ENCODE measurements at regions of chrX and their contacts with region 1.

Region 1: DNA sequence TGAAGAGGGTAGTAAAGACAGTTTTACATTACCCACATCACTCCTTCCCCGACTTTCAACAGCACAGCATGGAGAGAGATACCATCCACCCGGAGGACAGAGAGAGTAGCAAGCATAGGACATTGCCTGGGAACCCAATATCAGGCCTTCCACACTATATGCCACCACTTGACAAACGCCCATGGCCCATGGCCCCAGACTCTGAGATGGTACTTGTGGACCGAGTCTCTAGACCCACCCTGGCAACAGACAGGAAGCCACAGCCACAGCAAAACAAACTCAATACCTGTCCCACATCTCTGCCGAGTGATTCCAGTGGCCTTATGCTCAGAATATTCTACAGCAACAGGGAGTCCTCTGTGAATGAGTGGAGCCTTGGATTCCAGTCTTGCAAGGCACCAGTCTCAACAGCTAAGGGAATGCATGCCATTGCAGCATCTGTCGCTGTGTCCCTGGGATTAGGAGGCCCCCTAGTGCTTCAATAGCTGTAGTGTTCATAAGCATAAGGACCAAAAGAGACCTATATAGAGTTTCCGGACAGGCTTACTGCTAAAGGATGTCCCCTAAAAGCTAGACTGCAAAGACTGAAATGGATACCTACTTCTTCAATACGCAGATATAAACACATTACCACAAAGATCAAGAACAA is 14.7 kb upstream of the CT55 start:
- DNase-seq: peak; percentile 32
- ATAC-seq: peak; percentile 98
- H3K4me3 Mint-ChIP-seq: no peak overlapping the region
- H3K27ac Mint-ChIP-seq: no peak overlapping the region
- H3K4me1 Mint-ChIP-seq: peaks cover 4% of the 10 kb centered on the region; the same call in 1 of the 2 replicates
- H3K27me3 Mint-ChIP-seq: no peaks in the 10 kb centered on the region; the same call in 1 of the 2 replicates
- CTCF ChIP-seq: peak; percentile 51; the same call in 1 of the 2 replicates

Region 2: DNA sequence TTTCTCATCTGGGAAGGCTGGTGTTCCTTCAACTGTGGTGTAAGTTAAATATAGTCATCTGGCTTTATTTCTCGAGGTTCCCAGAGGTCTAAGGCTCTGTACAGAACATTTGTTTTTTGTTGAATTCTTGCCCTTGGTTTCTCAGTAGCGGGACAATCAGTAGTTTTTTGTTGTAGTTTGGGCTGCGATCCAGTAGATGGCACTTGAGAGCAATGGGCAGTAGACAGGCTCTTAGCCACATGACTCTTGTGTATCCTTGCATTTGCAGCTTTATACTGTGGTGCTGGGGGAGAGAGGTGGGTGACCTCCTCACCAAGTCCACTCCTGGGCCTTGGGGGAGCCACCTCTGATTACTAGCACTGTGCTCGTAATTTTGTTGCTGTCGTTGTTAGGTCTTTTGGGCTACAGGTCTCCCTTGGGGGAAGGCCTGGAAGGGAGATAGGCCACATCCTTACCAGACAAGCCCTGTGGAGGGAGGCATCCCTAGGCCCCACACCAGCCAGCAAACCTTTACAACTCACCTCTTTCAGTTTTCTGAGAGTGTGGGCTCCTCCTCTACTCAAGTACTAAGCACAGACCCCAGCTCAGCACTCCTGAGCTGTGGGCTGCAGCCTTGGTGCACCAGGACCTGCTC is 73.7 kb before region 1 on chrX:
- CTCF ChIA-PET with region 1: interaction called, 39 read pairs
- POLR2A ChIA-PET with region 1: no interaction called
- DNase-seq: peak; percentile 39
- ATAC-seq: peak; percentile 80
- H3K4me3 Mint-ChIP-seq: no peak overlapping the region
- H3K27ac Mint-ChIP-seq: no peak overlapping the region
- H3K4me1 Mint-ChIP-seq: no peaks in the 10 kb centered on the region
- H3K27me3 Mint-ChIP-seq: no peaks in the 10 kb centered on the region; the same call in 1 of the 2 replicates
- CTCF ChIP-seq: 0 out of 2 replicates have a peak, but pooled peaks have one; percentile 46

Measured in WTC11 (cell line).